Activated CD4-positive, alpha-beta T cell treated with anti-CD3 and anti-CD28 coated beads, Interleukin-2, amount 10 ng/mL, durations not matched to agents 24 days and 14 days (primary cell): ENCODE measurements at regions of chr3 and their contacts with region 1.

Region 1: DNA sequence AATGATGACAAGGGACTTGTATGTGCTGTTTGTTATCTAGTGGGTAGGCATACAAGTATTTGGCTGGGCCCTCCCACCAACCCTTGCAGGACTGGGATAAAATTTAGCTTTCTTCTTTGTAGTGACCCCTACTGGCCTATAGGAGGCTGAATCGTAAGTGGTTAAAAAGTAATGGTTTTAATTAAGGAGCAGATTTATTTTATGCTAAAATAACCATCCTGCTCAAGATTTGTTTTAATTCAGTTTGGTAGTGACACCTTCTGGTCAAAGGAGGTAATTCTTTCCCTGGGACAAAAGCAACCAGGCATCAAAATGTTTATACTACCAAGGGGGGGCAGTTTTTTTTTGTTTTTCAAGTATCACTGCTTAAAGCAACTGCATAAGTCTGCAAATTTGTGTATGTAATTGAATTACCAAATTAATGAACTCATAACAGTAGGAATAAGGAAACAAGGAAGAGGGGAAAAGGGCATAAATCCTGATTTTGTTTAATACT is 70.7 kb downstream of the TOP2B start:
- DNase-seq: peak; percentile 70
- H3K4me3 Mint-ChIP-seq: no peak overlapping the region
- H3K27ac Mint-ChIP-seq: no peak overlapping the region
- H3K4me1 Mint-ChIP-seq: no peaks in the 10 kb centered on the region
- H3K27me3 Mint-ChIP-seq: no peaks in the 10 kb centered on the region

Region 2: DNA sequence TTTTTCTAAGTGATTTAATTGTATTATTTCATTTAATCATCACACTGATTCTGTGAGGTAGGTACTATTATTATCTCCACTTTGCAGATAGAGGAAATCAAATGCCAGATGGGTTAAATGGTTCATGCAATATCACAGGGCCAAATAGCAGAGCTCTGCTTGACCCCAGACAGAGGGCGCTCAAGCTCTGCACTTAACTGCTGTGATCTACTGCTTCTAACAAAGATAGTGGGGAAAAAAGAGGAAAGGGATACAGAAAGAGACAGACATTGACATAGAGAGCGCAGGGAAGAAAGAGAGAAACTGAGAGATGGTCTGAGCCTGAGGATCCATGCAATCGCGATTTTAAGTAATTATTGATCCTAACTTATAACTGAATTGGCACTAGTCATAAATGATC is 820.3 kb before region 1 on chr3:
- intact Hi-C with region 1: loop called (anchors 10 kb)
- DNase-seq: no peak
- H3K4me3 Mint-ChIP-seq: no peak overlapping the region
- H3K27ac Mint-ChIP-seq: no peak overlapping the region
- H3K4me1 Mint-ChIP-seq: no peaks in the 10 kb centered on the region
- H3K27me3 Mint-ChIP-seq: no peaks in the 10 kb centered on the region

Region 3: DNA sequence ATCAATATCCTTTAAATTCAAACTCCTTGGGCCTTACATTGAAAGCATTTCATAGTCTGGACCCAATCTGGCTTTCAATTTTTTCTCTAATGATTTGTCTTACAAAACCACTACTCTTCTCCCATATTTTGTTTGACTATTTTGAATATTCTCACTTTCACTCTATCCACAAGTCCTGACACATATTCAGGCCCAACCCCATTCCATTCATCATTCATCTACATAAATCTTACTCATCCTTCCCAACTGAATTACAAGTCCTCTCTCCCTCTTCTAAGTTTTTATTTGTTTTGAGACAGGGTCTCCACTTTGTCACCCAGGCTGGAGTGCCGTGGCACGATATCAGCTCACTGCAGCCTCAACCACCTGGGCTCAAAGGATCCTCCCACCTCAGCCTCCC is 27.0 kb after region 1 on chr3:
- intact Hi-C with region 1: no loop called
- DNase-seq: no peak
- H3K4me3 Mint-ChIP-seq: no peak overlapping the region
- H3K27ac Mint-ChIP-seq: peak overlapping the region; percentile 4
- H3K4me1 Mint-ChIP-seq: peaks cover 4% of the 10 kb centered on the region
- H3K27me3 Mint-ChIP-seq: no peaks in the 10 kb centered on the region